ENCODE measurements at regions of chr2 and their contacts with region 1.

Region 1: GRCh38 chr2:219119422-219120043 is 41.1 kb downstream of the NHEJ1 start:
- DNase-seq: no peak
- H3K4me3 ChIP-seq: no peak overlapping the region
- H3K27ac ChIP-seq: no peak overlapping the region
- H3K27me3 ChIP-seq: no peaks in the 10 kb centered on the region
- CTCF ChIP-seq: peak; percentile 78

Region 2: GRCh38 chr2:218860950-218861381 is 258.6 kb before region 1 on chr2:
- CTCF ChIA-PET with region 1: no interaction called
- POLR2A ChIA-PET with region 1: no interaction called
- DNase-seq: peak; percentile 11
- H3K4me3 ChIP-seq: no peak overlapping the region
- H3K27ac ChIP-seq: no peak overlapping the region
- H3K27me3 ChIP-seq: peaks cover 71% of the 10 kb centered on the region
- CTCF ChIP-seq: no peak

Region 3: GRCh38 chr2:219057709-219058540 is 61.6 kb before region 1 on chr2:
- CTCF ChIA-PET with region 1: interaction called, 137 read pairs
- POLR2A ChIA-PET with region 1: interaction called, 5 read pairs
- DNase-seq: no peak
- H3K4me3 ChIP-seq: peak overlapping the region; percentile 13; the same call in 1 of the 2 replicates
- H3K27ac ChIP-seq: no peak overlapping the region
- H3K27me3 ChIP-seq: peaks cover 78% of the 10 kb centered on the region
- CTCF ChIP-seq: peak; percentile 89

Region 4: DNA sequence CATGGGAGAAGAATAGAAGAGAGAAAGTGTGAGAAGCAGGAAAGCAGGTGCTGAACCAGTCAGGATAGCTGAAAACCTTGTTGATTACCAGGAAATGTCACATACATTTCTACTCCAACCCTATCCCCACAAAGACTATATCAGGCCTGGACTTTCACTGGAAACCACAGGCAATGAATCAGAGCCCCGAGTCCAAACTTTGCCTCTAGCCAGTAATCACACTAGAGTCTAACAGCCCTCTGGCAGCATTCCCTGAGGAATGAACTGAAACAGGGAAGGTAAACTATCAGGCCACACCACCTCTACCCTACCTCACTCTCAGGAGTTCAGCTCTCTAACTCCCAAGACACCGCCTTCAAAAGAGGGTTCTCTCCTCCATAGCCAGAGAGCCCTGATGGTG is 40.1 kb before region 1 on chr2:
- CTCF ChIA-PET with region 1: interaction called, 122 read pairs
- POLR2A ChIA-PET with region 1: no interaction called
- DNase-seq: no peak
- H3K4me3 ChIP-seq: no peak overlapping the region
- H3K27ac ChIP-seq: peak overlapping the region; percentile 13
- H3K27me3 ChIP-seq: no peaks in the 10 kb centered on the region
- CTCF ChIP-seq: no peak

Region 5: DNA sequence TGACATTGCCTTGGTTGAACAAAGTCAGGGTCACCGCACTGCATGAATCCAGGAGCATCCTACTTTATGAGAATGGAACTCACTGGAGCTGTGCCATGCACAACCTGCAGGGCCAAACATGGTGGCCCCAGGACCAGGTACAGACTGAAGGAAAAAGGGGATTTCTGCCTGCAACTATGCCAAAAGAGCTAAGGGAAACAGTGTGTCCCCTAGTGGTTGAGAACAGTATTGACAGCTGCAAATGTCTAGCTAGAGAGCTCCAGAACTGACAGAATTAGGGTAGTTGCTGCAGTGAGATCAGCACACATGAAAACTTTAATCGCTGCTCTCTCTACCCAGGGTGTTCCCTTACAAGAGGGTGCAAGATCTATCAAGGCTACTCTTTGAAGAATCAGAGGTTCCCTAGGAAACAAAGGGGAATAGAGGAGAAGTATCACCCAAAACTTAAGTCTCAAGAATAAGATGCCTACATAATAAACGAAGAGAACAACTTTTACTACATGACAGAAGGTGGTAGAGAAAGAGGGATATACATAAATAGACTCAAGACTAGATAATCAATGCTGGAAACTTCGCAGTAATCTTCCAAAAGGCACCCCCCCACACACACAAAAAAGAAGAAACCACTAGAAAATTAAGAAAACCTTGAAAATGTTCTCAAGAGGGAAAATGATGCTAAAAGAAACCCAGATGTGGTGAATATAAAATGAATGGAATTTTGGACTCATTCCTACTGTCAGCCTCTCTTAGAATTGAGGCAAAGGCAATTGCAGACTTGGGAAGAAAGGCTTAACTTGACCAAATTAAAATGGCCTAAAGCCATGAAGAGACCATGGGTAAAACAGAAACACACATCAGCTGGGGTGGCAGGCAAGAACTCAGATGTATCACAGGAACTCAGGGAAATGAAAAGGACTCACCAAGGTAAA is 15.2 kb before region 1 on chr2:
- CTCF ChIA-PET with region 1: interaction called, 14 read pairs
- POLR2A ChIA-PET with region 1: no interaction called
- DNase-seq: no peak
- H3K4me3 ChIP-seq: no peak overlapping the region
- H3K27ac ChIP-seq: no peak overlapping the region
- H3K27me3 ChIP-seq: no peaks in the 10 kb centered on the region
- CTCF ChIP-seq: peak; percentile 84

Region 6: GRCh38 chr2:219133976-219134375 is 14.4 kb after region 1 on chr2:
- CTCF ChIA-PET with region 1: interaction called, 27 read pairs
- POLR2A ChIA-PET with region 1: no interaction called
- DNase-seq: no peak
- H3K4me3 ChIP-seq: no peak overlapping the region
- H3K27ac ChIP-seq: no peak overlapping the region
- H3K27me3 ChIP-seq: no peaks in the 10 kb centered on the region
- CTCF ChIP-seq: no peak

Region 7: GRCh38 chr2:219155054-219155644 is 35.6 kb after region 1 on chr2:
- CTCF ChIA-PET with region 1: interaction called, 31 read pairs
- POLR2A ChIA-PET with region 1: interaction called, 8 read pairs
- DNase-seq: peak; percentile 34
- H3K4me3 ChIP-seq: no peak overlapping the region
- H3K27ac ChIP-seq: no peak overlapping the region
- H3K27me3 ChIP-seq: no peaks in the 10 kb centered on the region
- CTCF ChIP-seq: peak; percentile 58